Activated naive CD4-positive, alpha-beta T cell treated with anti-CD3 and anti-CD28 coated beads for 36 hours (primary cell): ENCODE measurements at regions of chr9 and their contacts with region 1.

Region 1: GRCh38 chr9:76403352-76403751 is 9.1 kb upstream of the RFK start:
- DNase-seq: peak; percentile 34
- H3K4me3 Mint-ChIP-seq: peak overlapping the region; percentile 0
- H3K27ac Mint-ChIP-seq: no peak overlapping the region
- H3K4me1 Mint-ChIP-seq: peaks cover 10% of the 10 kb centered on the region
- H3K27me3 Mint-ChIP-seq: no peaks in the 10 kb centered on the region

Region 2: DNA sequence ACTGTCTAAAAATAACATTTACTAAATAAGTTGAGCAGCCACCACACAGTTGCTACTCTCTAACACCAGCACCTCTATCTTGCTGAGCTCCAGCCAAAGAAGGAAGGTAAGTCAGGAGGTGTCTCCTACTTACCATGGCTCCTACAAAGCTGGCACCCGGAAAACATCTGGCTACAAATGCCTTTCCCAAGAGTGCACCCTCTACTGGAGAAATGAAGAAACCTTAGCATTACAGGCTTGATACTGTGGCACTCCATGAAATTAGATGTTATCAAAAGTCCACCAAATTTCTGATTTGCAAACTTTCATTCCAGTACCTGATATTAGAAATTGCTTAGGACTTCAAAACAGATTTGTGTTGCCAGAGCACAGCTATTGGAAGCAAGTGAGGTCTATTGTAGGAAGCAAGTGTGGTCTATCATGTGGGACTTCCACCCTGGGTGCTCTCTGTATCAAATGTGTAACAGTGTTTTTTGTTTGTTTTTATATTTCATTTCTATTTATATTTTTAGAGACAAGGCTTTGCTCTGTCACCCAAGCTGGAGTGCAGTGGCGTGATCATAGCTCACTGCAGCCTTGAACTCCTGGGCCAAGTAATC is 16.5 kb after region 1 on chr9:
- CTCF ChIA-PET with region 1: interaction called, 9 read pairs
- intact Hi-C with region 1: loop called (anchors 1 kb)
- DNase-seq: no peak
- H3K4me3 Mint-ChIP-seq: no peak overlapping the region
- H3K27ac Mint-ChIP-seq: no peak overlapping the region
- H3K4me1 Mint-ChIP-seq: peaks cover 17% of the 10 kb centered on the region
- H3K27me3 Mint-ChIP-seq: no peaks in the 10 kb centered on the region

Region 3: DNA sequence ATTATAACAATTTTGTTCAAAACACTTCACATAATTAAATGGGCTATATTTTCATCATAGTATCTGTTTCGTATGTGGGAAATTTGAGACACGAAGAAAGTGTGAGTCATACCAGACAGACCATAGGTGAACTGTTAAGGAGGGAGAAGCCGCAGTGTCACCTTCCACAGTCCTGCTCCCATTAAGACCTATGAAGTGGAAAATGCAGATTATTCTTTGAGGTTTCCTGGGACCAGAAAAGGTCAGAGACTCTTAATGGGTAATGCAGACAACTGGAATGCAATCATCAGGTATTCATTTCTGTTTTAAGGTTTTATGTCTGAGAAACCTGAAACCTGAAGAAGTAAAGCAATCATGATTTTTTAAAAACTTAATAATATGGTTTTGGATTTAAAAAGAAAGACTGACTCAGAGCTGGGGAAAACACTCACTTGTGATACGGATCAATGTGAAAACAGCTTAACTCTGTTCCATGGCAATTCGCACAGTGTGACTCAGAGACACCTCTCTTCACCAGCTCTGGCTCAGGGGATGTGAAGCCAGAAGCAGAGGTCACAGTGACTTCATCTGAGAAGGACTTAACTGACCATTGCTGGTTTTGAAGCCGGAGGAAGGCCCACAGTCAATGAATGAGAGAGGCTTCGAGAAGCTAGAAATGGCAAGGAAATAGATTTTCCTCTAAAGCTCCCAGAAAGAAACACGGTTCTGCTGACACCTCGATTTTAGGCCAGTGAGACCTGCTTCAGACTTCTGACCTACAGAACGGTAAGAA is 38.4 kb after region 1 on chr9:
- CTCF ChIA-PET with region 1: interaction called, 4 read pairs
- intact Hi-C with region 1: loop called (anchors 1 kb)
- DNase-seq: peak; percentile 49
- H3K4me3 Mint-ChIP-seq: peak overlapping the region; percentile 28
- H3K27ac Mint-ChIP-seq: peak overlapping the region; percentile 77
- H3K4me1 Mint-ChIP-seq: peaks cover 24% of the 10 kb centered on the region
- H3K27me3 Mint-ChIP-seq: peaks cover 8% of the 10 kb centered on the region

Region 4: GRCh38 chr9:76651119-76651705 is 247.9 kb after region 1 on chr9:
- CTCF ChIA-PET with region 1: no interaction called
- intact Hi-C with region 1: loop called (anchors 2 kb)
- DNase-seq: no peak
- H3K4me3 Mint-ChIP-seq: peak overlapping the region; percentile 33
- H3K27ac Mint-ChIP-seq: no peak overlapping the region
- H3K4me1 Mint-ChIP-seq: peaks cover 19% of the 10 kb centered on the region
- H3K27me3 Mint-ChIP-seq: no peaks in the 10 kb centered on the region

Region 5: DNA sequence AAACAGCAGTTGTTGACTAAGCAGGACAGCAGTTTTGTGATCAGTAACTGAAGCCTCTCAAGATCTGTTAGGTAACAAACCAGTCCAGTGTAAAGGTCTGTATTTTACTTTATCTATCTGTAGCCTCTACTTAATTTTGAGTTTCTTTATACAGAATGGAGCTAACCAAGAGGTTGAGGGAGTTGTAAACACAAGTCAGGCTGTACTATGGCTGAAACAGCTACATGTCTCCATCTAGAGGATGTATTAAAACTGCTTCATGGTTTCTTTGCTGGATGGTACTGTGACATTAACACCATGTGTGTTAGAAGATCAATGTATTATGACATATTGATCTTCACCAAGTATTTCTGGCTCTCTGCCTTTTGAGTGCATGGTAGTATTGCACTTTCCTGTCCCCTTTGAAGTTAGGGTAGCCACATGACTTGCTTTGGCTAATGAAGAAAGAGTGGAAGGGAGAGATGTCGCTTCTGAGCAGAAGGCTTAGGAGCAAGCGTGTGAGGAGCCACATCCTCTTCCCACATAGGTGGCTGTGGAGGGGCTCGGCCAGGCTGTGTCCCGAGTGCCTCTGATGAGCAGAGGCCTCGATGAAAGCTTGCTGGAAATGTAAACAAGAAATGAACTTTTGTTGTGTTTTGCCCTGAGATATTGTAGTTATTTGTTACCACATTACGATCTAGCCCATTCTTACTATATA is 255.3 kb after region 1 on chr9:
- CTCF ChIA-PET with region 1: interaction called, 4 read pairs
- intact Hi-C with region 1: loop called (anchors 1 kb)
- DNase-seq: no peak
- H3K4me3 Mint-ChIP-seq: no peak overlapping the region
- H3K27ac Mint-ChIP-seq: no peak overlapping the region
- H3K4me1 Mint-ChIP-seq: peaks cover 5% of the 10 kb centered on the region
- H3K27me3 Mint-ChIP-seq: peaks cover 3% of the 10 kb centered on the region

Region 6: DNA sequence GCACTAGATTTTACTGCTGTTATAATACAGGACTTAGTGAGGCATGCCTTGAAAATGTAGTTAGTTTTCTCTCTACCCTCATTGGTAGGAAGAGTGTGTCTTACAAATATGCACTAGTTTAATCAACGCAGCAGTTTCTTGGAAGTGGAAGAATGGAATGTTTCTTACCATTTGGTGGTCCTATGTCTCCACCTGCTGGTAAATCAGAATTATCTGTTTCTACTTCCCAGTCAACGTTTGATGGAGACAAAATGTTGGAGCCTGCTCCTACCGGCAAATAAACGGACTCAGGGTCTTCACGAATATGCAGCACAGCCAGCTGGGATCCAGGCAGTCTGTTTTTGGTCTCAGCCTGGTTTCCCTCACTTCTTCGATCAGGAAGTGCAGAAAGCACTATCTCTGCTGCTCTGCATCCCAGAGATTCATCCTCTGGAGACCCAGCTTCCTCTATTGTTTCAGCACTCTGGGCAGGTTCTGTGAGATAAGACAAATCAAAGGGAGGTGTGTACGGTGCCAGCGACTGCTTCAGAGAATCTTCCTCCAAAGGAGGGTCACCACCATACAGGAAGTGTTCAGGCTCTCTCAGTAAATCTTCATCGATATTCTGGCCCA is 301.3 kb after region 1 on chr9:
- CTCF ChIA-PET with region 1: interaction called, 4 read pairs
- intact Hi-C with region 1: loop called (anchors 1 kb)
- DNase-seq: no peak
- H3K4me3 Mint-ChIP-seq: no peak overlapping the region
- H3K27ac Mint-ChIP-seq: no peak overlapping the region
- H3K4me1 Mint-ChIP-seq: no peaks in the 10 kb centered on the region
- H3K27me3 Mint-ChIP-seq: peaks cover 41% of the 10 kb centered on the region